Right ventricle myocardium inferior (tissue), 1 donor: ENCODE measurements at regions of chr4 and their contacts with region 1.

Region 1: DNA sequence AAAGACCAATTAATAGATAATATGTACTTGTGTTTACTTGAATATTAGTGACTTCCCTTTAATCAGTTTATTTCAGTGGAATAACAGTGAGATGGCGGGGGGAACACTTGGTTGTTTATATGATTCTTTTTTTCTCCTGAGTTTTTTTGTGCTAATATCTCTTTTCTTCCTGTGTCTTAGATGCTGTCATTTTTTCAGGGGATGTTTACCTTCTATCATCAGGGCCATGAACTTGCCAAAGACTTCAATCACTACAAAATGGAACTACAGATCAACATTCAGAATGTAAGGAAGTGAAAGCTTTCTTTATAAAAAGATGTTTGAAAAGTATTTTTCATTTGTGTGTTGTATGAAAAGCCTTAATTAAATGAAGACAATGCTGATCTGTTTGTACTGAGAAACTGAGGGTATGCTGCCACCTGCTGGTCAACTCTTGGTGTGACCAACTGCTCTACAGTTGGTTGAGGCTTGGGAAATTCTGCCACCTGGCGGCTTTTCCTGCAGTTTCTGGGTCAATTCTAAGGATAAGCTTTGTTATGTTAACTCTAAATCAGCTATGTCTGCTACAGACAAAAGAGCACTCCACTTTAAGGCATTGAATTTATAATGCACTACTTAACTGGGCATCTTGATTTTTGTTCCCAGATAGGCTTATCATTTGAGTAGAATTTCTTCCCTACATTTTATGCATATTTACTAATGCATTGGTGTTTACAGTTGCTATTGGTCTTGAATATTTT is 134.8 kb downstream of the ARHGAP10 start:
- DNase-seq: peak; percentile 88
- ATAC-seq: peak; percentile 90

Region 2: DNA sequence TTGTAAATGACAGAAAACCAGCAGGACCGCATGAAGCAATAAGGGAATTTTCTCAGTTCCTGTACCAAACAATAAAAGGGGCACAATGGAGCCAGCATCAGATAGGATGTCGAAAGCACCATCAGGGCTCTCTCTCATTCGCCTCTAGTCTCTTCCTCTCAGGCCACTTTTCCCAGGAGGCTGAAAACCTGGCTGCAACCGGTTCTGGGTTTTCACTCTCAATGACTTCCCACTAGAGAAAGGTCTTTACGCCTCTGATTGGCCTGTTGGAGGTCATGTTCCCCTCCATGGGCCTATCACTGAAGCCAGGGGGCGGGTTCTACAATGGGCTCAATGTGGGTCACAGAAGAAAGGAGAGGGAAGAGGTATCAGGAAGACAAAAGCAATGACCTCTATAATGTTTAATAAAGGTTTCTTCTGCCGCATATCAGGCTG is 1957.4 kb before region 1 on chr4:
- intact Hi-C with region 1: no loop called
- DNase-seq: peak; percentile 75
- ATAC-seq: peak; percentile 94

Region 3: DNA sequence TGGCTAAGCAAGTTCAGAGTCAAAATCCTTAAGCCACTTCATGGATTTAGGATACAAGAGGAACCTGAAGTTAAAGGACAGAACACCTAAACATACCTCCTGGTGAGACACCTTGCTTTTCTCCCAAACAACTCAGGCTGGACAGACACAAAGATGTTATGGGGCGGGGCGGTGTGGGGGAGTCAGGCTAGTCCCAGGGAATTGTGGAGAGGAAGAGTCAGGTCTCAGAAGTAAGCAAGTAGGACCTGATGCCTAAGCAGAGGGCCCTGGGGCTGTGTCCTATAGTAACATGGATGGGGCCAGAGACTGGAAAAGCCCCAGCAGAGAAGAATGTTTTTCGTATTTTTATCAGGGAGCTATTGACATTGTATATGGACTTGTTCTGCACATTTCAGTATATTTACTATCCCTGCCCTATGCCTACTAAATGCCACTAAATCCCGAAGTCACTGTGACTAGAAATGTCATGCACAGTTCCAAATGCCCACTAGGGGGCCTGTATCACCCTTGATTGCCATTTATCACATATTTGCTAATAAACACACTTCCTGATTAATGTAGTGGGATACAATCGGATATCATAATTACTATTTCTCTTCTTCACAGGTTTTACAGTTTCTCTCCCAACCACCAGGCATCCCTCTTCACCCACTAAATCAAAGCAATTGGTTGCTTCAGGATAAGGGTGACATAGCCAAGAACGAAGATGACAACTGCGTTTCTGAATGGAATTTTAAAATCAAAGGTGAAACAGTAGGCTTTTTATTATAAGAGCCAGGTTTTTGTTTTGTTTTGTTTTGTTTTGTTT is 158.6 kb before region 1 on chr4:
- intact Hi-C with region 1: loop called (anchors 1 kb)
- DNase-seq: no peak
- ATAC-seq: peak; percentile 78

Region 4: GRCh38 chr4:147741190-147741785 is 125.4 kb before region 1 on chr4:
- intact Hi-C with region 1: no loop called
- DNase-seq: no peak
- ATAC-seq: no peak

Region 5: DNA sequence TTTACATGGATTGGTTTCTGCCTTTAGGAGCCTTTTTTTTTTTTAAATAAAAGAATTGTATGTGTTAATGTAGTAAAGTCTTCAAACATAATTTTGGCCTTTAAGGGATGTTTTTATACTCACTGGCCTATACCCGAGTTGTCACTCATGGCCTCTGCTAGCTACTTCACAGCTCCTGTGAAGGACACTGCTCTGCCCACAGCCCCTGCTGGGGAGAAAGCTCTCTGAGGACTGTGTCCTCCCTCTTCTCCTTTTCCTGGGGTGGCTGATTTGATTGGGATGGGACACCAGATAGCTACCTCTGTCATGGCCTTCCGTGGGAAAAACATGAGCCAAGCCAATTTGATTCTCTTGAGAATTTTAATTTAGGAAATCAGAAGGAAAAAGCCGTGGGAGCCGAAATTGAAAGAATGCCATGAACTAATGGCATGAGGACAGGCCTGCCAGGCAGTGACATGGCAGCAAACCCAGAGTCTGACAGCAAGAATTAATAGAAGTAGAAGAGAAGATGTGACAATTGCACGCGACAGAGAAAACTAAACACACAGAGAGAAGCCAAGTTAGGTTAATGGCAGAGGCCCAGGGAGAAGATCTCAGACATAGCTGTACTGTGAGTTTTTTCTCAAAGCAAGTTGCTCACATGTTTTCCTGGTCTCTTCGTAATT is 53.5 kb before region 1 on chr4:
- intact Hi-C with region 1: loop called (anchors 10 kb)
- DNase-seq: no peak
- ATAC-seq: peak; percentile 40

Region 6: DNA sequence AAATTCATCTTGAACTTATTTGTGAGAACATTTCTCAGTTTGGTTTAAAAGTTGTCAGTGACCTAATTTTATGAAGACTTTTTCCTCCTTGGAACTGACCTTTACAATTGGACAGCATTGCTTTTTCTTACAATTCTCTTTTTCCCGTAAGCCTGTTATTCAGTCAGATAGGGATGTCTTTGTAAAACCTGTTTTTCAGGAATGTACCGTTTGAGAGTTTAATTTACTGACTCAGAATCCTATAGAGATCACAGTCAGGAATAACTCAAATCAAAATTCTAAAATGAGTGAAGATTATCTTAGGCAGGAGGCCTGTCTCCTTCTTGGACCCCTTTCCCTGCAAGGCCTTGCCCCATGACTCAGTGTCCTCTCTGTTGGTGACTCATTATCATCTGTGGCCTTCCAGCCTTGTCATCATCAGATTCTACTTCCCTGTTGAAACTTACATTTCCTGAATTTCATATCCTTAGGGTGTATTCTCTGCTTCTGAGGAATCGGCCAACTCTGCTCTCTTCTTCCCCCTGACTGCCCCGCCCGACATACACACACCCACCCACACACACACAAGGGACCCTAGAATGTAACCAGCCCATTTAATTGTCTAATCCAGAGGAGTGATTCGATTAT is 35.0 kb before region 1 on chr4:
- intact Hi-C with region 1: loop called (anchors 5 kb)
- DNase-seq: no peak
- ATAC-seq: peak; percentile 74